H1 (cell line): ENCODE measurements at regions of chr17 and their contacts with region 1.

Region 1: GRCh38 chr17:58046239-58047094 is 36.8 kb upstream of the DYNLL2 start:
- DNase-seq: peak in 1 of 2 experiments; percentile 59
- H3K4me3 ChIP-seq: peak overlapping the region in 1 of 4 experiments; percentile 15; a peak in 1 of 8 replicates
- H3K27ac ChIP-seq: no peak overlapping the region
- H3K4me1 ChIP-seq: peaks cover 0 to 7% (median 4%) of the 10 kb centered on the region in 4 experiments; a peak in 3 of 7 replicates
- H3K27me3 ChIP-seq: 0 out of 7 replicates have a peak, but pooled peaks cover 0 to 2% (median 0%) of the 10 kb centered on the region in 4 experiments
- CTCF ChIP-seq: no peak
- EP300 ChIP-seq: no peak
- POLR2A ChIP-seq: no peak
- RAD21 ChIP-seq: no peak; a peak in 1 of 4 replicates

Region 2: DNA sequence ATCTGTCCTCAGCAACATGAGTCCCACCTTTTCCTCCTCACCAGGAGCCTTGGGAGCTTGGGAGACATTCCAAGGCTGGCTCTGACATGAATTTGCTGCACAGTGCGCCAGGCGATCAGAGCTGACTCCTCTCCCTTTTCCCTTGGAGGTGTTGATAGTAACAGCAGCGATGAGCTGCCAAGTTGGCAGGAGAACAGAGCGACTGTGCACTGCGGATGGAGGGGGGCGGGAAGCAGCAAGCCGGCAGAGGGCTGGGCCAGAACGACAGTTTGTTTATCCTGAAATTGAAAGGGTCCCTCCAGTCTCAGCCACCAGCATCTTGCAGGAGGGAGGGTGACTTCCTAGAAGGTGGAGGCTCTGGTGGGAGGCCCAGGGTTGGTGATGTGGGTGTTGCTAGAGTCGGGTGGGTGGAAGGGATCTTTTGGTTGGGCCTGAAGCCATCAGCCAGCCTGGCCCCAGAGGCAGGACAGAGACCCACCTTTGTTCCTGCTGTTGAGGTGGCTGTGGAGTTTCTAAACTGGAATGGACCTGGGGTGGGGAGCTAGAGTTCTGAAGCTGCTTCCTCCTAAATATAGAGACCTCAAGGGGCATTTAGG is 14.2 kb after region 1 on chr17:
- CTCF ChIA-PET with region 1: interaction called, 5 read pairs
- POLR2A ChIA-PET with region 1: interaction called, 12 read pairs
- DNase-seq: no peak
- H3K4me3 ChIP-seq: no peak overlapping the region
- H3K27ac ChIP-seq: no peak overlapping the region
- H3K4me1 ChIP-seq: peaks cover 0 to 2% (median 0%) of the 10 kb centered on the region in 4 experiments; a peak in 1 of 7 replicates
- H3K27me3 ChIP-seq: no peaks in the 10 kb centered on the region
- CTCF ChIP-seq: no peak
- EP300 ChIP-seq: no peak
- POLR2A ChIP-seq: no peak
- RAD21 ChIP-seq: no peak

Region 3: GRCh38 chr17:58112970-58113631 is 66.6 kb after region 1 on chr17:
- CTCF ChIA-PET with region 1: no interaction called
- POLR2A ChIA-PET with region 1: no interaction called
- DNase-seq: peak in 1 of 2 experiments; percentile 96
- H3K4me3 ChIP-seq: no peak overlapping the region
- H3K27ac ChIP-seq: no peak overlapping the region
- H3K4me1 ChIP-seq: no peaks in the 10 kb centered on the region
- H3K27me3 ChIP-seq: no peaks in the 10 kb centered on the region
- CTCF ChIP-seq: peak; percentile 86 to 99 (median 93)
- EP300 ChIP-seq: no peak
- POLR2A ChIP-seq: no peak
- RAD21 ChIP-seq: peak; percentile 98 to 99

Region 4: DNA sequence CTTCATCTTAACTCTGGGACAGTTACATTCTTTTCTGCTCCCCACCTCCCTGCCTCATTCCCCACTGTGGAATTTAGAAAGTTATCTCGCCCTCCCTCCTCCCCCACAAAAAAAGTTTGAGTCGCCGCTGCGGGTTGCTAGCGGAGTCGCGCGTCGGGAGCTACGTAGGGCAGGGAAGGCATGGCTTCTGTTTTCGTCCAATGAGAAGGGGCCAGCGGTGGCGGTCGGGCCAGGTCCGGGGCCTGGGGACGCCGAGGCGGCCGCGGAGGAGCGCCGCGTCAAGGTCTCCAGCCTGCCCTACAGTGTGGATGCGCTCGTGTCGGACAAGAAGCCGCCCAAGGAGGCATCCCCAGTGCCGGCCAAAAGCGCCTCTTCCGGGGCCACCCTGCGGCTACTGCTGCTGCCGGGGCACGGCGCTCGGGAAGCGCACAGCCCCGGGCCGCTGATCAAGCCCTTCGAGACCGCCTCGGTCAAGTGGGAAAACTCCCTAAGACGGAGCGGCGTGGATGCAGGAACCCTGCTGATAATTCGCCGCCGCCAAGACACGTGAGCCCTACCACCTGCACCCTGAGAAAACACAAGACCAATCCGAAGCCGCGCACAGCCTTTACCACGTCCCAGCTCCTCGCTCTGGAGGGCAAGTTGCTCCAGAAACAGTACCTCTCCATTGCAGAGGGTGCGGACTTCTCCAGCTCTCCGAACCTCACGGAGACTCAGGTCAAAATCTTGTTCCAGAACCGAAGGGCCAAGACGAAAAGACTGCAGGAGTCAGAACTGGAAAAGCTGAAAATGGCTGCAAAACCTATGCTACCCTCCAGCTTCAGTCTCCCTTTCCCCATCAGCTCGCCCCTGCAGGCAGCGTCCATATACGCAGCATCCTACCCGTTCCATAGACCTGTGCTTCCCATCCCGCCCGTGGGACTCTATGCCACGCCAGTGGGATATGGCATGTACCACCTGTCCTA is 110.7 kb after region 1 on chr17:
- CTCF ChIA-PET with region 1: no interaction called
- POLR2A ChIA-PET with region 1: no interaction called
- DNase-seq: peak in 1 of 2 experiments; percentile 78
- H3K4me3 ChIP-seq: peak overlapping the region; percentile 54 to 73 (median 67)
- H3K27ac ChIP-seq: no peak overlapping the region
- H3K4me1 ChIP-seq: peaks cover 0 to 10% (median 2%) of the 10 kb centered on the region in 4 experiments; a peak in 2 of 7 replicates
- H3K27me3 ChIP-seq: peaks cover 0 to 13% (median 7%) of the 10 kb centered on the region in 4 experiments; a peak in 5 of 7 replicates
- CTCF ChIP-seq: peak in 2 of 3 experiments; percentile 25; a peak in 2 of 4 replicates
- EP300 ChIP-seq: no peak
- POLR2A ChIP-seq: peak in 1 of 2 experiments; percentile 80; a peak in 2 of 3 replicates
- RAD21 ChIP-seq: no peak